ENCODE measurements at regions of chr1 and their contacts with region 1.

Region 1: GRCh38 chr1:224684979-224685425 is 68.9 kb downstream of the CNIH3 start:
- DNase-seq: no peak
- H3K4me3 ChIP-seq: no peak overlapping the region
- H3K27ac ChIP-seq: no peak overlapping the region
- H3K4me1 ChIP-seq: no peaks in the 10 kb centered on the region
- H3K27me3 ChIP-seq: no peaks in the 10 kb centered on the region
- CTCF ChIP-seq: no peak

Region 2: DNA sequence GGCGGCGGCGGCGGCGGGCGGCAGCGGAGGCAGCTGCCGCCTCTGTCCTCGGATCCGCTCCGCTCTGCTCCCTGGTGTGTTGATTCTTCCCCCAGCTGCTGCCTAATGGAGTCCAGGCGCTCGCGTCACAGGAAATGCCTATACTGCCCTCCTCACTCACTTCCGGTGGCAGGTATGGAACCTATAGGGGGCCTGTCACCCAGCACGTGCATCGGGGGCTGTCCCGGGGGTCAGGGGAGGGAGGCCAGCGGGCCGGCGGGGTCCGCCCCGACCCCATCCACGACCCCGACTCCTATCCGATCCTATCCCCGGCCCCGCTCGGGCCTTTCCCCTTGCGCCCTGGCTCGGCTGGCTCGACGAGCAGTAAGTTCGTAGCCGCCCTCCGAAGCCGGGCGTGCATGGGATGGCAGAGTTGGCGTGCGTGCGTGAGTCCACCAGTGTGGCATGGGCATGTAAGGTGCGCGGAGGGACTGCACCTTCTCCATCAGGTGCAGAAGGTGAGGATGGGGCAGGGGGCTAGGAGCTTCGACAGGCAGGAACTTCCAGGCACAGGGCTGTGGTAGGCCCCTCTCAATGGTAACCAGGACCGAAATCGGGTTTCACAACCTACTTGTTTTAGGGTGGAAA is 250.2 kb before region 1 on chr1 and contains the start of gene WDR26:
- CTCF ChIA-PET with region 1: no interaction called
- POLR2A ChIA-PET with region 1: no interaction called
- intact Hi-C with region 1: no loop called
- DNase-seq: peak; percentile 76 to 78
- H3K4me3 ChIP-seq: peak within 1 kb of the TSS; percentile 87
- H3K27ac ChIP-seq: peak within 1 kb of the TSS; percentile 71
- H3K4me1 ChIP-seq: peaks cover 50% of the 10 kb centered on the region
- H3K27me3 ChIP-seq: no peaks in the 10 kb centered on the region
- CTCF ChIP-seq: 0 out of 2 replicates have a peak, but pooled peaks have one; percentile 17
- total RNA-seq, gene WDR26: 76.0 and 88.9 TPM in 2 replicates

Region 3: DNA sequence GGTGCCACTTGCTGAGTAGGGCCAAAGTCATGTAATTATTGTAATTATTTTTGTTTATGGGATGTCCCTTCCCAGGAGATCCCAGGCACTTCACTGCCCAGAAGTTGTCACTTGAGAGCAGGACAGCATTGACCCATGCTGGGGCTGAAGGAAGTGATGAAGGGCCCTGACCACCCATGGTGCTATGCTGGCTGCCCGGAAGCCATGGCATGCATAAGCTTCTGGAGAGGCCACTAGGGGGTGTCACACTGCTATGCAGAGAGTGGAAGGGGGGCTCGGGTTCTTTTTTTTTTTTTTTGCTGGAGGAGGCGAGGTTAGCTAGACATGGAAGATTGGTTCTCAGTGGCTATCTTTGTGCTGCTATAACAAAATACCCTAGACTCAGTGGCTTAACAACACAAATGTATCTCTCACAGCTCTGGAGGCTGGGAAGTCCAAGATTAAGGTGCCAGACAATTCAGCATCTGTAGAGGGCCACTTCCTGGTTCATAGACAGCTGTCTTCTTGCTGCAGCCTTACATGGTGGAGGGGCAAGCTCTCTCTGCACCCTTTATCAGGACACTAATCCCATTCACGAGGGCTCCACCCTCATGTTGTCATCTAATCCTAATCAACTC is 16.0 kb after region 1 on chr1:
- CTCF ChIA-PET with region 1: interaction called, 5 read pairs
- POLR2A ChIA-PET with region 1: interaction called, 33 read pairs
- intact Hi-C with region 1: no loop called
- DNase-seq: no peak
- H3K4me3 ChIP-seq: no peak overlapping the region
- H3K27ac ChIP-seq: no peak overlapping the region
- H3K4me1 ChIP-seq: no peaks in the 10 kb centered on the region
- H3K27me3 ChIP-seq: no peaks in the 10 kb centered on the region
- CTCF ChIP-seq: peak; percentile 58